ENCODE measurements at regions of chr17 and their contacts with region 1.

Region 1: DNA sequence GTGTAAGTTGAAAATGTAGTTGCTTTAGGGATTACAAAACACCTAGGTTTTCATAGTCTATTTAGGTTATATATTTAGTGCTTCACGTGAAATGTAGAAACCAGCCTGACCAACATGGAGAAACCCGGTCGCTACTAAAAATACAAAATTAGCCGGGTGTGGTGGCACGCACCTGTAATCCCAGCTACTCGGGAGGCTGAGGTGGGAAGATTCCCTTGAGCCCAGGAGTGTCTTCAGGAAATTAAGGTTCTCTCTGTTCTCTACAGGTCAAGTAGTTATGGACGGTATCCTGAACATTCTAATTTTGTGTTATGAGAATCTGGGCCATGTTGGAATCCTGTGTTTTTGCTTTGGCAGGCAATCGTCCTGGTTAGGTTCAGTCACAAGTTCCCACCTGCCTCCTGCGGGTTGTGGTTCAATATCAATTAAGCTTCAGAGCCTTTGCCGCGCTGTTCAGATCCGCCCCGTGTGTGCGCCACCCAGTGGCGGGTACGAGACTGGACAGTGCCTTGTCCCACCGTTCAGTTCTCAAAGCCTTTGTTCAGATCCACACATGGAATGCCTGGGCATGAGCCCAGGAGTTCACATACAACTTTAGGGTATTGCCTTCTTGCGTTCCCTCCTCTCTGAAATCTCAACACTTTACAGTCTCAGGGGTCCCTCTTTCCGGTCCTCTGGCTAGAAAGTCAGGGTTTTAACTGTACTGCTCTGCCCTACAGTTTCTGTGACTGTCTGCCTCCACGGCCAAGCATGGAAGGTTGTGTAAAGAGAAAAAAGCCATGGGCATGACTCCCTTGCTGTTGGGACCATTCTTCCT is 41.7 kb downstream of the HEATR6 start:
- DNase-seq: peak; percentile 12
- ATAC-seq: peak; percentile 98
- H3K4me3 ChIP-seq: no peak overlapping the region
- H3K27ac ChIP-seq: no peak overlapping the region
- H3K4me1 ChIP-seq: peaks cover 7% of the 10 kb centered on the region
- H3K27me3 ChIP-seq: peaks cover 0 to 3% of the 10 kb centered on the region in 2 experiments; a peak in 1 of 4 replicates
- CTCF ChIP-seq: peak; percentile 89 to 97 (median 97)
- EP300 ChIP-seq: no peak
- POLR2A ChIP-seq: no peak
- RAD21 ChIP-seq: peak; percentile 48; the same call in 1 of the 2 replicates

Region 2: DNA sequence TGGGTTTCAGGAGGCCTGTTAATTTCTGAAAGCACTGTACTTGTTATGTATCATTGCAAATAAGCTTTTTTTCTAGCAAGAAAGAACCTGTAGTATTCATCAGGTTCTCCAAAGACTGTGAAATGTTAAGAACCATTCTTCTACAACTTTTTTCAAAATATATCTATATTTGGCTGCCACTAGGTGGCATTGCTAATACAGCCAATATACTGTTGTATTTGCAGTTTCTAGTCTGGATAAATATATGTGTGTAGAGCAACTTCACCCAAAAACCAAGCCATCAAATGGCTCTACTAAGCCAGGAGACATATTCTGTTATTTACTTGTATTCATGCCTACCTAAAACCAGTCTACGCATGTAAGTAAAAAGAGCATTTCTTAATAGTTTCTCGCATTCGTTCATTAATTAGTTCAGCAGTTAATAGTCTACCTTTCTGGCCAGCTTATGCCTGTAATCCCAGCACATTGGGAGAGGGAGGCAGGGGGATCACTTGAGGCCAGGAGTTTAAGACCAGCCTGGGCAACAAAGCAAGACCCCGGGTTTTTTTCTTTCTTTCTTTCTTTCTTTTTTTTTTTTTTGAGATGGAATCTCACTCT is 290.1 kb before region 1 on chr17:
- CTCF ChIA-PET with region 1: interaction called, 30 read pairs
- POLR2A ChIA-PET with region 1: interaction called, 3 read pairs
- RAD21 ChIA-PET with region 1: interaction called, 10 read pairs
- SMC1A ChIA-PET with region 1: interaction called, 10 read pairs
- in situ Hi-C with region 1: loop called (anchors 5 kb)
- intact Hi-C with region 1: loop called (anchors 10 kb)
- DNase-seq: no peak
- ATAC-seq: peak; percentile 83
- H3K4me3 ChIP-seq: no peak overlapping the region
- H3K27ac ChIP-seq: no peak overlapping the region
- H3K4me1 ChIP-seq: peaks cover 4% of the 10 kb centered on the region
- H3K27me3 ChIP-seq: no peaks in the 10 kb centered on the region
- CTCF ChIP-seq: peak; percentile 47 to 65 (median 61)
- EP300 ChIP-seq: no peak
- POLR2A ChIP-seq: no peak
- RAD21 ChIP-seq: peak; percentile 82

Region 3: DNA sequence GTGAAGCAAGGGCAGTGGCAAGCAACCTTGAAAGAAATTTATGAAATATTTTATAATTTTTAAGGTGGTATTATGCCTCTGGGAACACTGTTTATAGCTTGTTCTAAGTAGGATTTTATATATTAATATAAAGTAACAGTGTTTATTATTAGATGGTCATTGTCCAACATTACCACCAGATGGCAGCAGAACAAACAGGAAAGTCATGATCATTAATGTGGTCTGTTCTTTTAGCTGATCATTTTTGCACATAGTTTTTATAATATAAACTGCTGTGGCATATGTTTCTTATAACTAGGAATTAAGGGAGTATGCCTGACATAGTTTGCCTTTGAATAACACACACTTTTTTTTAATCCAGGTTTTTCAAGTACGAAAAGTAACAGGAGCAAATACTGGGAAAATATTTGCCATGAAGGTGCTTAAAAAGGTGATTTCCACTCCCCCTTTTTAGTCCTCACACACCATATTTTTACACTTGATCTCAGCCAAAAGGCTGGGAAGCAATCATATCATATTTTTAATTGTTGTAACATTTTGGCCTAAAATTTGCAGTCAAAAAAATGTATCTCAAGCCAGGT is 122.6 kb before region 1 on chr17:
- CTCF ChIA-PET with region 1: interaction called, 24 read pairs
- POLR2A ChIA-PET with region 1: no interaction called
- RAD21 ChIA-PET with region 1: interaction called, 5 read pairs
- SMC1A ChIA-PET with region 1: interaction called, 20 read pairs
- in situ Hi-C with region 1: loop called (anchors 5 kb)
- intact Hi-C with region 1: loop called (anchors 10 kb)
- DNase-seq: no peak
- ATAC-seq: peak; percentile 77
- H3K4me3 ChIP-seq: no peak overlapping the region
- H3K27ac ChIP-seq: no peak overlapping the region
- H3K4me1 ChIP-seq: no peaks in the 10 kb centered on the region
- H3K27me3 ChIP-seq: no peaks in the 10 kb centered on the region
- CTCF ChIP-seq: peak; percentile 42 to 54 (median 47); a peak in 5 of 6 replicates
- EP300 ChIP-seq: no peak
- POLR2A ChIP-seq: no peak
- RAD21 ChIP-seq: peak; percentile 53

Region 4: DNA sequence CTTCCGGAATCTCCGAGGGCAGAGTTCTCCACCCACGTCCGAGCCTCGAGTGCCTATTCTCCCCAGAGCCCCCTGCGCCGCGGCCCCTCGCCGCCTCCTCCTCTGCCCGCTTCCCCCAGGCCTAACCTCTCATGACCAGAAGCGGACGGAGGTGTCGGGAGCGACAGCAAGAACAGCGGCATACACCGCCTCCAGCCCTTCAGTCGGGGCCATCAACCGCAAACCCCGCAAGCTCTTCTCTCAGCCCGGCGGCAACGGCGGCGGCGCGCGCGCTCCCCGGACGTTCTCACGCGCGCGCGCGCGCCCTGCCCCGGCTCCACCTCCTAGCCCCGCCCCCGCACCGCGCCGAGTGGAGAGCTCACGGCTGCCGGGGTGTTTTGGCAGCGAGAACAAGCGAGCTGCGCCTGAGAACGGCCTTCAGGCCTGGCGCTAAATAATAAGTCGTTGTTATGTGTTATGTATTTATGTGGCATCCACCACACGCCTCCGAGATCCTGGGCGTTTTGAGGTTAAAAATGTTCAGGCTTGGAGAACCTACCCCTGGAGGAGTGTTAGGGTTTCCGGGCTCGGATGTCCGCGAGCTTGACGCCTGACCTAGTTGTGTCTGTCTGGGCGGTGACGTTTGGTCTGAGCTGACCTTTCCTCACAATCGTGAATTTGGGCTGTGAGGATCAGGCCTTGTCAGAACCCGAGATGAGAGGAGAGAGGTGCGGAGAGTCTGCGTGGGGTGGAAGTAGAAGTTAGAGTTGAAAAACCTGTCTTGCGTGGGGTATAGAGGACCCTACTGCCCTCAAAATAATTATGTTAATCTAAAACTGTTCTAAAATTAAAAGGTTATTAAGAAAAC is 72.3 kb before region 1 on chr17 and contains the start of gene RNFT1:
- CTCF ChIA-PET with region 1: interaction called, 7 read pairs
- POLR2A ChIA-PET with region 1: no interaction called
- RAD21 ChIA-PET with region 1: interaction called, 3 read pairs
- SMC1A ChIA-PET with region 1: interaction called, 3 read pairs
- in situ Hi-C with region 1: no loop called
- intact Hi-C with region 1: loop called (anchors 10 kb)
- DNase-seq: peak; percentile 33
- ATAC-seq: peak; percentile 94
- H3K4me3 ChIP-seq: peak within 1 kb of the TSS; percentile 74
- H3K27ac ChIP-seq: peak within 1 kb of the TSS; percentile 67
- H3K4me1 ChIP-seq: peaks cover 5% of the 10 kb centered on the region; the same call in 1 of the 2 replicates
- H3K27me3 ChIP-seq: no peaks in the 10 kb centered on the region
- CTCF ChIP-seq: no peak
- EP300 ChIP-seq: no peak
- POLR2A ChIP-seq: peak; percentile 79
- RAD21 ChIP-seq: no peak
- polyA plus RNA-seq, gene RNFT1: 13.6 to 16.9 TPM